ENCODE measurements at regions of chr11 and their contacts with region 1.

Region 1: DNA sequence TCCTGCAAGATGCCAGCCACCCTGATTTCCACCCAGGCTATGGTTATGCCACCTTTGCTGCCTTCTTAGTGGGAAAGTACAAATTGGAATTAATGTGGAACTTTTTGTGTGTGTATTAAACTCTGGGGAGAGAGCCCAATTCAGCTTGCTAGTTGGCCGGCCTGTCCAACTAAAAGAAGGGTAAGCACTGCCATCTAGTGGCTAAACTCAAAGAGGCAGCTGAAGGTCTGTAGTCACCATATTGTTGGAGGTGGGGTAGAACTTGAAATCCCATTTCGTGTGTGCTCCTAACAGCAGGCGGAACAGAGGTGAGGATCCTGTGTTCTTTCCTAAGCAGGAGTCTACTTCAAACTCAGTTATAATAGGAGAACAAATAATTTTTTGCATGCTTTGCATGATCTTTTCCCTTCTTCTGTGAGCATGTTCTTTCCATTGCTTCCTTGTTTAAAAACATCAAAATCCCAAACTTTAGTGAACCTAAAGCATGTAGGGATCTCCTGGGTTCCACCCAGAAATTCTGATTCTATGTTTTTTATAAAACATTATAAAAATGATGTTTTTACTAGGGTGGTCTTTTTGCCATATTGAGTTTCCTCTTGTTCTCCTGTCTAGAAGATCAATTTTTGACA is 138.8 kb upstream of the SORL1-AS1 start:
- DNase-seq: peak; percentile 69 to 75 (median 74)
- H3K4me3 ChIP-seq: no peak overlapping the region
- H3K4me3 Mint-ChIP-seq: no peak overlapping the region
- H3K27ac ChIP-seq: no peak overlapping the region
- H3K27ac Mint-ChIP-seq: peak overlapping the region in 6 of 7 donors; percentile 0 to 82 (median 60)
- H3K4me1 ChIP-seq: no peaks in the 10 kb centered on the region
- H3K4me1 Mint-ChIP-seq: peaks cover 3 to 11% (median 5%) of the 10 kb centered on the region in 4 donors
- H3K27me3 ChIP-seq: no peaks in the 10 kb centered on the region
- H3K27me3 Mint-ChIP-seq: no peaks in the 10 kb centered on the region

Region 2: DNA sequence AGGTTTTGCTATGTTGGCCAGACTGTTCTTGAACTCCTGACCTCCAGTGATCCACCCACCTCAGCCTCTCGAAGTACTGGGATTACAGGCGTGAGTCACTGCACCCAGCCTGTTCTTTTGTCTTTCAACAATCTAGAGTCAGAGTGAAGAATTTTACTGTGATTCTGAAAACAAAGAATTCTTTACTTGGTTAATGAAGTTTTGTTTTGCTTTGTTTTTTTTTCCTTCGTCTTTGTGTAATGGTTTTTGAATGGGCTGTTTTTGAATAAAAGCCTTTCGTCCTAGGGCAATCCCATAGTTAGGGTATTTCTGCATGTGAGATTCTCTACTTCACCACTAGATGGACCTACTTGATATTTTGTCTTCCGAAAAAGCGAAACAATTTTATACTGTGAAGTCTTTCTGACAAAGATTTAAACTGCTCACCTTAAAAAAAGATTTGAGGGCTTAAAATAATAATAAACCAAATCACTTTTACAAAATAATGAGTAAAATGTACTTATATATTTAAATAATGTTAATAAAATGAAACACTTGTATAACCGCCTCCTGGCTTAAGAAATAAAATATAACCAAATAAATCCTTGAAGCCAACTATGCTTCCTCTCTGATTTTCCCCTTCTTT is 342.4 kb before region 1 on chr11:
- CTCF ChIA-PET with region 1: interaction called, 13 read pairs
- POLR2A ChIA-PET with region 1: interaction called, 3 read pairs
- intact Hi-C with region 1: loop called (anchors 1 kb)
- DNase-seq: peak; percentile 30 to 43 (median 35)
- H3K4me3 ChIP-seq: no peak overlapping the region
- H3K4me3 Mint-ChIP-seq: no peak overlapping the region
- H3K27ac ChIP-seq: no peak overlapping the region
- H3K27ac Mint-ChIP-seq: peak overlapping the region in 2 of 7 donors; percentile 0 to 18
- H3K4me1 ChIP-seq: no peaks in the 10 kb centered on the region
- H3K4me1 Mint-ChIP-seq: peaks cover 0 to 4% (median 1%) of the 10 kb centered on the region in 4 donors
- H3K27me3 ChIP-seq: no peaks in the 10 kb centered on the region
- H3K27me3 Mint-ChIP-seq: peaks cover 8% of the 10 kb centered on the region in 2 donors

Region 3: DNA sequence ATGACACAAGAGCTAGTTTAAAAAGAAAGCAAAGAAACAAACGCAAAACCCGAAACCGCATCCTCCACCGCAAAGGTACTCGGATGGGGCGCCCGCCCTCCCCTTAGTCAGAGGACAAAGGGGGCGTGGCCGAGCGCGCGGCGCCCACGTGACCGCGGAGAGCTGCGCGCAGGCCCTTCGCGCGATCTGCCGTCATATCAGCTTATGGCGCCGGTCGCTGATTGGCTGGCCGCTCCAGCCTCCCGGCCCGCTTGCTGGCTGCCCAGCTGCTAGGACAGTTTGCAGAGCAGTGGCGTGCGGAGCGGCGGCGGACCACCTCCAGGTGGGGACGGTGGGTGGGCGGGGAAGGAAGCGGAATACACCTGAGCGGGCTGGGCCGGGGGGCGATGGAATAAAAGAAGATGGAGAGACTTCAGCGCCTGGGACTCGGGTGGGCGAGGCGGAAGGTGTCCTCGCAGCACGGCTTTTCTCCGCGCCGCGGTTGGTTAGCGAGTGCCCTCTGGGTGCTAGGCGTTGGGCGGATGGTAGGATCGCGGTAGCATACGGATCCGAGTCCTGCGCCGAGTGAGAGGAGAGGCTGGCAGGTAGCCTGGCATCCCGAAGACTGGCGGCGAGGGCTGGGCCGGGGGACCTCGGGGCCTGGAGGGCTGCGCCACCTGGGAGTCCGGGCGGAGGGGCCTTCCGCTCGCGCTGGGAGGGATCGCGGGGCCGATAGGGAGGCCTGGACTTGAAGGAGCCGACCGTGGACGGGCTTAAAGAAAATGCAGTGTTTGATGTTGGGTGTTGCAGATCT is 298.8 kb before region 1 on chr11 and contains the start of gene SC5D:
- CTCF ChIA-PET with region 1: interaction called, 10 read pairs
- POLR2A ChIA-PET with region 1: interaction called, 4 read pairs
- intact Hi-C with region 1: no loop called
- DNase-seq: peak; percentile 94 to 96 (median 95)
- H3K4me3 ChIP-seq: peak within 1 kb of the TSS; percentile 70 to 86
- H3K4me3 Mint-ChIP-seq: peak within 1 kb of the TSS; percentile 90 to 98 (median 96)
- H3K27ac ChIP-seq: peak within 1 kb of the TSS; percentile 86
- H3K27ac Mint-ChIP-seq: peak within 1 kb of the TSS; percentile 98 to 100 (median 99)
- H3K4me1 ChIP-seq: peaks cover 20% of the 10 kb centered on the region
- H3K4me1 Mint-ChIP-seq: peaks cover 36 to 52% (median 43%) of the 10 kb centered on the region in 4 donors
- H3K27me3 ChIP-seq: no peaks in the 10 kb centered on the region
- H3K27me3 Mint-ChIP-seq: peaks cover 0 to 2% of the 10 kb centered on the region in 2 donors
- total RNA-seq, gene SC5D: 27.4 to 28.7 TPM

Region 4: GRCh38 chr11:121318848-121319834 is 272.4 kb before region 1 on chr11:
- CTCF ChIA-PET with region 1: interaction called, 25 read pairs
- POLR2A ChIA-PET with region 1: interaction called, 8 read pairs
- intact Hi-C with region 1: loop called (anchors 1 kb)
- DNase-seq: peak; percentile 48 to 55 (median 53)
- H3K4me3 ChIP-seq: no peak overlapping the region
- H3K4me3 Mint-ChIP-seq: no peak overlapping the region
- H3K27ac ChIP-seq: no peak overlapping the region
- H3K27ac Mint-ChIP-seq: peak overlapping the region in 3 of 7 donors; percentile 8 to 67 (median 13)
- H3K4me1 ChIP-seq: peaks cover 5% of the 10 kb centered on the region
- H3K4me1 Mint-ChIP-seq: peaks cover 17 to 21% (median 19%) of the 10 kb centered on the region in 4 donors
- H3K27me3 ChIP-seq: no peaks in the 10 kb centered on the region
- H3K27me3 Mint-ChIP-seq: peaks cover 0 to 1% of the 10 kb centered on the region in 2 donors

Region 5: DNA sequence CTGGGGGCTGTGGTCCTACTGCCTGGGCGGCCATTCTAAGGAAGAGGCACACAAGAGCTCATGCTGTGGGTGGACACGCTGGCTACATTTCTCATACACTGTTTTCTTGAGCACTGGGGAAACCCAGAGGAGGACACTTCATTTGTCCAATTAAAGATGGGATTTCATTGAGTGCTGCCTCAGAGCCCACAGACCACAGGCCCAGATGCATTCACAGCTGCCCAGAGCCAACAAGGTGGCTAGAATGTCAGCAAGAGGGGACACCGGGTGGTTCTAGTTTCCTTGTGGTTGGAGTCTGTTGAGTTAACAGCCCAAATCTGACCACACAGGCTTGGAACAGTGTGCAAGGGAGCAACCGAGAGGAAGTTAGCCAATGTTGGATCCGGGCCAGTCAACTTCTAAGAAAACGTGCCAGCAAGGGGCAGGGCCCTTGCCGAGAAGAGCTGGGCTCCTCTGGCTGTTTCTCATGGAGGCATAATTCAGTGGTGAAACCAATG is 174.4 kb before region 1 on chr11:
- CTCF ChIA-PET with region 1: interaction called, 3 read pairs
- POLR2A ChIA-PET with region 1: no interaction called
- intact Hi-C with region 1: loop called (anchors 5 kb)
- DNase-seq: peak; percentile 58 to 72 (median 63)
- H3K4me3 ChIP-seq: no peak overlapping the region
- H3K4me3 Mint-ChIP-seq: peak overlapping the region in 7 of 8 donors; percentile 49 to 81 (median 68)
- H3K27ac ChIP-seq: peak overlapping the region; percentile 36
- H3K27ac Mint-ChIP-seq: peak overlapping the region; percentile 91 to 96 (median 93)
- H3K4me1 ChIP-seq: peaks cover 72% of the 10 kb centered on the region
- H3K4me1 Mint-ChIP-seq: peaks cover 51 to 85% (median 71%) of the 10 kb centered on the region in 4 donors
- H3K27me3 ChIP-seq: no peaks in the 10 kb centered on the region
- H3K27me3 Mint-ChIP-seq: no peaks in the 10 kb centered on the region

Region 6: DNA sequence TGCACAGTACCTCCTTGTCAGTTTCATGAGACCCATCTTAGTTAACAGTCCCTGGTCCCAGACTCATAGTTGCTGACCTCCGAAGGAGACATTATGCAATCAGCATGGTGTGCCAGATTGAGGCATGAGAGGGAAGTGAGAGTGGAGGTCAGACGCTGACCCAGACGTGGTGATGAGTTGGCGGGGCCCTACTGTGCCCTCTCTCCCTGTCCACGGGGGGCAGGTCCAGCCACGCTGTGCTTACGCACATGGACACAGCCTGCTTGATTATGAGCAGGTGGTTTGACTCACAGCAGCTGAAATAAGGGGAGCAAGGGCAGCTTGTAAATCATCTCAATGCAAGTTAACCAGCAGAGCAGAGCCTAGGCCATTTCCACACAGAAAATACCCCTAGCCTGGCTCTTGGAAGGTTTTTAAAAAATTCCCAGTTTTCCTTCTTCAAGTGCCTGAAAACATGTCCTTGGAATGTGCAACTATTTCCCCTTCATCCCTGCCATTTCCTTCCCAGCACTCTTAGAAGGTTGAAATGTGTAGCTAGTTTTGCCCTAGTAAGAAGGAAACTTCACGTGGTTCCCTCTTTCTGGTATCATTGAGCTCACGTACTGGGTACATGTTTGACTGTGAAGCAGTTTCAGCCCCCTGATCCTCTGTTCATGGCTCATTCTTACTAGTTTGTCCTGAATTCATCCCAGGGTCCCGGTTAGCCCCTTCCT is 16.1 kb before region 1 on chr11:
- CTCF ChIA-PET with region 1: interaction called, 11 read pairs
- POLR2A ChIA-PET with region 1: interaction called, 4 read pairs
- intact Hi-C with region 1: loop called (anchors 2 kb)
- DNase-seq: no peak
- H3K4me3 ChIP-seq: no peak overlapping the region
- H3K4me3 Mint-ChIP-seq: no peak overlapping the region
- H3K27ac ChIP-seq: no peak overlapping the region
- H3K27ac Mint-ChIP-seq: peak overlapping the region in 6 of 7 donors; percentile 12 to 84 (median 70)
- H3K4me1 ChIP-seq: peaks cover 3% of the 10 kb centered on the region
- H3K4me1 Mint-ChIP-seq: peaks cover 4 to 20% (median 9%) of the 10 kb centered on the region in 4 donors
- H3K27me3 ChIP-seq: no peaks in the 10 kb centered on the region
- H3K27me3 Mint-ChIP-seq: no peaks in the 10 kb centered on the region

Region 7: DNA sequence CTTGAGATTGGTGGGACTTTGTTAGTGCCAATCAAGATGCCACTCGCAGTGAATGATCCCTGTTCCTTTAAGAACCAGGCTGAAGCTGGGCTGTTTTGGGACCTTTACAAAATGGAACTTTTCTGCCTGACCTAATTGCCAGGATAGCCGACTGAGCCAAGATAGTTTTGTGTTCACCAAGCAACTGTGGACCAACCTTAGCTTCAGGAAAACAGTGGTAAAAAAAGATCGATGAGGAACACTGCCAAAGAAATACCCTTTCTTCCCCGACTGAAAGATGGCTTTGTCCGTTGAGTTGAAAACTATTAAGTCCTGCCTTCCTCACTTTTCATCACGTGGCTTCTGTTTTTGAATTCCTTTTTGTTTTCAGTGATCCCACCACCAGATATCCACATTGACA is 19.2 kb after region 1 on chr11:
- CTCF ChIA-PET with region 1: interaction called, 17 read pairs
- POLR2A ChIA-PET with region 1: no interaction called
- intact Hi-C with region 1: no loop called
- DNase-seq: no peak
- H3K4me3 ChIP-seq: no peak overlapping the region
- H3K4me3 Mint-ChIP-seq: no peak overlapping the region
- H3K27ac ChIP-seq: no peak overlapping the region
- H3K27ac Mint-ChIP-seq: peak overlapping the region in 1 of 7 donors; percentile 58
- H3K4me1 ChIP-seq: no peaks in the 10 kb centered on the region
- H3K4me1 Mint-ChIP-seq: peaks cover 0 to 2% (median under 1%) of the 10 kb centered on the region in 4 donors
- H3K27me3 ChIP-seq: no peaks in the 10 kb centered on the region
- H3K27me3 Mint-ChIP-seq: no peaks in the 10 kb centered on the region

Measured in CD4-positive, alpha-beta memory T cell (primary cell).